ENCODE measurements at regions of chr18 and their contacts with region 1.

Region 1: DNA sequence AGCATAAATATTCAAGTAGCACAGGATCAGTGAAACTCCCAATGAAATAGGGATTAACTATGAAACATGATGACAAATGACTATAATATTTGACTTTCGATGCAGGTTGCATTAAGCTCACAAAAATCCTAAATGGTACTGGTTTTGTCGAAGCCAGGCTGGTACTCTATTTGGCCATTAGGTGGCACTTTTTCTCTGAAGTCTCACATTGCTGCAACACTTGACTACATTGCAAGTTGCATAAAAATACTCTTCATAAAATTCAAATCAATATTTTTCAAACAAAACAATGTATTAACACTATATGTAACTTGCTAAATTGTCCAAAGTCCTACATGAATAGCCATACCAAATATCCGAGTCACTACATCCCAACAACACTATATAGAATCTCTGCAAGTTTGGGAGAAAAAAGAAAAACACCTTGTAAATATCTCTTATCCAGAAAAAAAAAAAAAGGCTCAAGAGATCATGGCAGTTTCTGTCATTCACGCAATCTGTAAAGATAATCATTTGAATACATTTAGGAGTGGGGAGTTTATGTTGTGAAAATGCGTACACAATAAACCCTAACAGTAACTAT is 9.5 kb downstream of the RTTN start:
- DNase-seq: peak; percentile 27
- H3K4me3 Mint-ChIP-seq: no peak overlapping the region
- H3K27ac Mint-ChIP-seq: no peak overlapping the region
- H3K4me1 Mint-ChIP-seq: peaks cover 9% of the 10 kb centered on the region
- H3K27me3 Mint-ChIP-seq: no peaks in the 10 kb centered on the region
- CTCF ChIP-seq: peak; percentile 50

Region 2: GRCh38 chr18:69757733-69758132 is 438.2 kb before region 1 on chr18:
- CTCF ChIA-PET with region 1: no interaction called
- intact Hi-C with region 1: no loop called
- DNase-seq: no peak
- H3K4me3 Mint-ChIP-seq: no peak overlapping the region
- H3K27ac Mint-ChIP-seq: no peak overlapping the region
- H3K4me1 Mint-ChIP-seq: peaks cover 2% of the 10 kb centered on the region
- H3K27me3 Mint-ChIP-seq: no peaks in the 10 kb centered on the region
- CTCF ChIP-seq: no peak

Region 3: DNA sequence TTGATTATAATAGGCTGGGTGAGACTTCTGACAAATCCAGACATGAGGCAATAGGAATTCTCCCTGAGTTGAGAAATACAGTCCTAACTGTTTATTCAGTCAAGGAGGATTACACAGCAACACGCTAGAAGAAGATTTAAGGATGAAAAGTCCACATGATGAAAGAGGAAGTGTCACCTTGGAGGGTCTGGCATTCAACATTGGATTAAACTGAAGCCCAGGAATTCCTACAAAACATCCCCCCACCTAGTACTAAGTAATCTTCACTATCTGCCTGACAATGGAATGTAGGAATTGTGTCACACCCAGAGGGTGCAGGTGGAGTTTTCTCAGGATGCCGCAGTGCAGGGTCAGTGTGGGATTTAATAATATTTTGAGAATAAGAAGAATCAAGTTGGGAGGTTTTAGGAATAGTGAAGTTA is 235.3 kb after region 1 on chr18:
- CTCF ChIA-PET with region 1: interaction called, 8 read pairs
- intact Hi-C with region 1: loop called (anchors 1 kb)
- DNase-seq: no peak
- H3K4me3 Mint-ChIP-seq: no peak overlapping the region
- H3K27ac Mint-ChIP-seq: no peak overlapping the region
- H3K4me1 Mint-ChIP-seq: peaks cover 10% of the 10 kb centered on the region
- H3K27me3 Mint-ChIP-seq: no peaks in the 10 kb centered on the region
- CTCF ChIP-seq: no peak